Sciatic nerve (tissue), 2 donors: ENCODE measurements at regions of chr5 and their contacts with region 1.

Region 1: DNA sequence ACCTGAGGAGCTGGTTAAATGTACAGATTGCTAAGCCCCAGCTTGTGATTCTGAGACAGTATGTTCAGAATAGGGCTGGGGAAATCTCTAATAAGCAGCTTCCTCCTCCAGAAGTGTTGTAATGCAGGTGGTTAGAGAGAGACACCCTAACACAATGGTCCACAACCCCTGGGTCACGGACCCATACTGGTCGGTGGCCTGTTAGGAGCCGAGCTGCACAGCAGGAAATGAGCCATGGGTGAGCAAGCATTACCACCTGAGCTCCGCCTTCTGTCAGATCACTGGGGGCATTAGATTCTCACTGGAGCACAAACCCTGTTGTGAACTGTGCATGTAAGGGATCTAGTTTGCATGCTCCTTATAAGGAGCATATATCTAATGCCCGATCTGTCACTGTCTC is 61.8 kb downstream of the SLC36A1 start:
- DNase-seq: no peak
- ATAC-seq: no peak

Region 2: GRCh38 chr5:150853561-150853960 is 655.7 kb before region 1 on chr5:
- intact Hi-C with region 1: no loop called
- DNase-seq: no peak
- ATAC-seq: no peak

Region 3: DNA sequence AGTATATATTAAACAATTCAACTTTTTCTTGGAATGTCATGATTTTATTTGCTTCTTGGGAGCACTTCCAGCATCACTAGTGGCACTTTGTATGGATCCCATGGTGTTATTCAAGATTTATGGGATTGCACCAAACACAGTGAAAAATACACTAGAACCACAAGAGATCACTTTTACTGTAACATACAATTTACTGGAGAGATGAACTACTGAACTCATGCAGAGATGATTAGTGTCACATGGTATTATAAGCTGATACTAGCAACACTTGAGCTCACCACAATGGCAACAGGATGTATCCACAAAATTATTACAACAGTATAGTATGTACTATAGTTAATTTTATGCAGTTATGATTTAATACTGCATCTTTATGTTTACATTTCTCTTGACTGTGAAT is 145.6 kb before region 1 on chr5:
- intact Hi-C with region 1: no loop called
- DNase-seq: no peak
- ATAC-seq: no peak

Region 4: DNA sequence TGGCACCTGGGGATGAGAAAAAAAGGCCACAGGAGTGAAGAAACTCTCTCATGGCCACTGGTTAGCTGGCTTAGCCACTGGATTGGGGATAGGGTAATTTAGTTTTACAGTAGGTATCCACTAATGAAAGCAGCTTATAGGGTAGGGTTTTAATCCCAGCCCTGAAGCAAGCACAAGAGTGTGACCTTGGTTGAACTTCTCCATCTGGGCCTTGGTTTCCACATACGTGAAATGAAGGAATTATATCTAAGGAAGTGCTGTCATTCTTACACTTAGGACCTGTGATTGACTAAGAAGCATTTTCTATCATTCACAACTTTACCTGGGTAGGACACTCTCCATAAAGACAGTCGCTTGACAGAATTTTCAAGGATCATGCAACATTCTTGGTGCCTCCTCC is 32.3 kb after region 1 on chr5:
- intact Hi-C with region 1: no loop called
- DNase-seq: no peak
- ATAC-seq: no peak

Region 5: DNA sequence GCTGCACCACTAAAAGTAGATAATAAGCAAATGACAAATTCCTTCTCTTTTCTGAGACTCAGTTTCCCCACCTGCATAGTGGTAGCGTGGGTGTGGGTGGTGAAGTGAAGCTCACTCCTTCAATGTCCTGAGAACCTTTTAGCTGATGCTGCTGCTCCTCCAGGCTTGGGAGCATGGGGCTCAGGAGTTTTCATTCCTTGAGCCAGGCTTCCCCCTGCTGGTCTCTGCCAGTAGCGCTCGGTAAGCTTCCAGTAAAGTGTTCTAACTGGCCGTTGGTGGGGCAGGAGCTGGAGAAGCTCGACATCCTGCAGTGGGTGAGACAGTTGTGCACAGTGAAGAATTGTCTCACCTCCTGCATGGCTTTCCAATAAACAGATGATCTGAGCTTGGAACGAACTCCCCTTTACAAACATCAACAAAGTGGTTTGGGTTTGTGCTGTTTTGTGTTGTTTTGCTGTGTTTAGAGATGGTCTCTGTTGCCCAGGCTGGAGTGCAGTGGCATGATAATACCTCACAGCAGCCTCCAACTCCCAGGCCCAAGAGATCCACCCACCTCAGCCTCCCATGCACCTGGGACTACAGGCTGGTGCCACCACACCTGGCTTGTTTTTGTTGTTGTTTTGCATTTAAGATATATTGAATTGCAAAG is 142.9 kb after region 1 on chr5:
- intact Hi-C with region 1: loop called (anchors 5 kb)
- DNase-seq: peak; percentile 90
- ATAC-seq: peak; percentile 95